HepG2 (cell line): ENCODE measurements at regions of chr16 and their contacts with region 1.

Region 1: DNA sequence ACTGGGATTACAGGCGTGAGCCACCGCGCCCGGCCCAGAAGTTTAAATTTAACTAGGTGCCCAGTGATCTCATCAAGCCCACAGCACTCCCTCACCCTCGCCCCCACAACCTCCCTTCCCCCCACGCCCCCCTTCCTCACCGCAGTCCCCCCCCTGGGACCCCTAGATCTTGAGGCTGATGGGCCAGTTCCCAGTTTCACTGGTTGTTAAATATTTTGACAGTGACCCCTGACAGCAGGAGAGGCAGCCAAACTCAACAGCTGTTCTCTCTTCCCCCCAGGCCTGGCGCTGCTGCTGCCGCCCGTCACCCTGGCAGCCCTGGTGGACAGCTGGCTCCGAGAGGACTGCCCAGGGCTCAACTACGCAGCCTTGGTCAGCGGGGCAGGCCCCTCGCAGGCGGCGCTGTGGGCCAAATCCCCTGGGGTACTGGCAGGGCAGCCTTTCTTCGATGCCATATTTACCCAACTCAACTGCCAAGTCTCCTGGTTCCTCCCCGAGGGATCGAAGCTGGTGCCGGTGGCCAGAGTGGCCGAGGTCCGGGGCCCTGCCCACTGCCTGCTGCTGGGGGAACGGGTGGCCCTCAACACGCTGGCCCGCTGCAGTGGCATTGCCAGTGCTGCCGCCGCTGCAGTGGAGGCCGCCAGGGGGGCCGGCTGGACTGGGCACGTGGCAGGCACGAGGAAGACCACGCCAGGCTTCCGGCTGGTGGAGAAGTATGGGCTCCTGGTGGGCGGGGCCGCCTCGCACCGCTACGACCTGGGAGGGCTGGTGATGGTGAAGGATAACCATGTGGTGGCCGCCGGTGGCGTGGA is 15.6 kb downstream of the QPRT start:
- DNase-seq: no peak
- ATAC-seq: no peak; the same call in 2 of the 3 replicates
- H3K4me3 ChIP-seq: no peak overlapping the region
- H3K27ac ChIP-seq: no peak overlapping the region
- H3K4me1 ChIP-seq: peaks cover 19% of the 10 kb centered on the region
- H3K27me3 ChIP-seq: no peaks in the 10 kb centered on the region
- CTCF ChIP-seq: no peak
- EP300 ChIP-seq: no peak
- POLR2A ChIP-seq: peak in 1 of 2 experiments; percentile 25; a peak in 1 of 4 replicates
- RAD21 ChIP-seq: no peak

Region 2: GRCh38 chr16:30032083-30032819 is 337.7 kb after region 1 on chr16:
- CTCF ChIA-PET with region 1: interaction called, 11 read pairs
- POLR2A ChIA-PET with region 1: no interaction called
- in situ Hi-C with region 1: loop called (anchors 10 kb)
- intact Hi-C with region 1: no loop called
- DNase-seq: peak; percentile 82
- ATAC-seq: peak; percentile 65
- H3K4me3 ChIP-seq: no peak overlapping the region
- H3K27ac ChIP-seq: no peak overlapping the region
- H3K4me1 ChIP-seq: peaks cover 23% of the 10 kb centered on the region
- H3K27me3 ChIP-seq: peaks cover 11 to 51% of the 10 kb centered on the region in 2 experiments
- CTCF ChIP-seq: peak; percentile 97
- EP300 ChIP-seq: no peak; a peak in 2 of 4 replicates
- POLR2A ChIP-seq: no peak
- RAD21 ChIP-seq: peak; percentile 85